ENCODE measurements at regions of chr17 and their contacts with region 1.

Region 1: DNA sequence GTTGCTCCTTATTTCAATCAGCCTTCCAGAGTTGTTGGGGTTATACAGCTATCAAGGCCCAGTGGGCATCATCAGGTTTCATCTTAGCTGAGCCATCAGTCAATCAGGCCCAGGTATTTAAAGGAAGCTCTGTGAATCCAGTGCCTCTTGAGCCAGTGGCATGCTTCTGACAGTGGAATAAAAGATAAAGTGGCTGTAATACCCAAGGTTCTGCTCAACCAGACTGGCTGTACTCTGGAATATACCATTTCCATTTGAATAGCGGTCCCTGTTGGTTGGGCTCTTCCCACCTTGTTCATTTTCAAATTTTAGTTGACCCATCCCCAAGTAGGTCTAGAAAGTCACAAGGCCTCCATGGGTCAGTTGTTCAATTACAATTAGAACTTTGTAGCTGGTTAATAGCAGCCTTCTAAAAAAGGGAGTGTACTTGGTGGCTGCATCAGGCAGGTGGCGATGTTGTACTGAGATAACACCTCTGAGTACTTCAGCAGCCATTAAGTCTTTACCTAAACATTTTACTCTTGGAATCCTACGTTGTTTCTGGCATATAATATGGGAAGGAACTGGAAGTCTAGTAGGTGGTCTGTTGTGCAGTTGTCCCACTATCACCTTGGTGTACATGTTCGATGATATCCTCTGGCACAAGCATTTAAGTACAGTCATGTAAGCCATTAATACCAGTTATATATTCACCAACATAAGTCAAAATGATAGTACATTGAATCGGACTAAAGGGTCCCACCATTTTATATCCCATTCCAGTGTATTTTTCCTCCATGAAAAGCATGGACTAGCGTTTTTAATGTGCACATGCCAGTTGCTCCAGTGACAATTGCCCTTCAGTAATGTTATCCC is 294.1 kb downstream of the BCAS3 start:
- DNase-seq: peak; percentile 71
- H3K4me3 ChIP-seq: peak overlapping the region in 1 of 2 experiments; percentile 8; a peak in 1 of 4 replicates
- H3K27ac ChIP-seq: no peak overlapping the region
- H3K4me1 ChIP-seq: no peaks in the 10 kb centered on the region
- H3K27me3 ChIP-seq: no peaks in the 10 kb centered on the region
- CTCF ChIP-seq: peak; percentile 79
- EP300 ChIP-seq: no peak
- RAD21 ChIP-seq: peak; percentile 97

Region 2: GRCh38 chr17:60554351-60554788 is 417.4 kb before region 1 on chr17:
- CTCF ChIA-PET with region 1: no interaction called
- POLR2A ChIA-PET with region 1: no interaction called
- DNase-seq: no peak
- H3K4me3 ChIP-seq: no peak overlapping the region
- H3K27ac ChIP-seq: no peak overlapping the region
- H3K4me1 ChIP-seq: no peaks in the 10 kb centered on the region
- H3K27me3 ChIP-seq: no peaks in the 10 kb centered on the region
- CTCF ChIP-seq: no peak
- EP300 ChIP-seq: no peak
- RAD21 ChIP-seq: no peak

Region 3: DNA sequence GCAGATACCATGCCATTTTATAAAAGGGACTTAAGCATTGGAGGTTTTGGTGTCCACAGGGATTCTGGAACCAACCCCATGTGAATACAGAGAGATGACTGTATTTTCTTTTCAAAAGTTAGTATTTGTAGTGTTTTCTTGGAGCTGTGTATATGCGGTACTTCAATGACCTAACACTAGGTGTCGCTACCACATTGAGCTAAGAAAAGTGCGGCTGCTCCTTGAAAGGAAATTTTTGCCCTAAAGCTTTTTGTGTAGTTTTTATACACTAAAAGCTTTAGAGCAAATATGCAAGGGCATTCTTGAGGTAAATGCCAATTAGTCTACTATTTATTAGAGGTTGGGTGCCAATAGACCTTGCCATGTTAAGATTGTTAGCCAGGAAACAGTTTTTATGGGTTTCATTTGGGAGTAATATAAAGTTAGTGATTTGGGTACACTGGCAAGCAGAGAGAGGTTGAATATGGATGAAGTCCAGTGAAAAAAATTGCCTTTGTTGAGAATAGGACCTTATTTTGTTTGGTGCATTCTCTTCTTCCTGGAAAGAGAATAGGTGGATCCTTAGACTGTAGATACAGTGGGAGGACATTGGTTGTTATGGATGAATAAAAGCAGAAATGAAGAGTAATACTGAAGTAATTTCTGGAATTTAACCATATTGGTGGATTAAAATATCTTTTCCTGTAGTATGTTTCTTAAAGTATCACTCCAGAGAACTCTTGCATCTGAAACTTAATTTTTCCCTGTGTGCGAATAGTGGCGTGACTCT is 250.8 kb before region 1 on chr17:
- CTCF ChIA-PET with region 1: interaction called, 13 read pairs
- POLR2A ChIA-PET with region 1: no interaction called
- DNase-seq: peak; percentile 66
- H3K4me3 ChIP-seq: peak overlapping the region in 1 of 2 experiments; percentile 25; a peak in 2 of 4 replicates
- H3K27ac ChIP-seq: peak overlapping the region; percentile 8 to 51; a peak in 2 of 4 replicates
- H3K4me1 ChIP-seq: peaks cover 0 to 5% of the 10 kb centered on the region in 2 experiments; a peak in 2 of 4 replicates
- H3K27me3 ChIP-seq: no peaks in the 10 kb centered on the region
- CTCF ChIP-seq: peak; percentile 100
- EP300 ChIP-seq: no peak
- RAD21 ChIP-seq: peak; percentile 98

Region 4: GRCh38 chr17:60743799-60744198 is 227.9 kb before region 1 on chr17:
- CTCF ChIA-PET with region 1: interaction called, 11 read pairs
- POLR2A ChIA-PET with region 1: no interaction called
- DNase-seq: no peak
- H3K4me3 ChIP-seq: peak overlapping the region; percentile 21 to 27; a peak in 3 of 4 replicates
- H3K27ac ChIP-seq: peak overlapping the region; percentile 79 to 84
- H3K4me1 ChIP-seq: peaks cover 10 to 17% of the 10 kb centered on the region in 2 experiments; a peak in 3 of 4 replicates
- H3K27me3 ChIP-seq: no peaks in the 10 kb centered on the region
- CTCF ChIP-seq: no peak
- EP300 ChIP-seq: 0 out of 4 replicates have a peak, but pooled peaks of 1 of the 2 experiments have one; percentile 36
- RAD21 ChIP-seq: no peak

Region 5: GRCh38 chr17:60916043-60916442 is 55.7 kb before region 1 on chr17:
- CTCF ChIA-PET with region 1: no interaction called
- POLR2A ChIA-PET with region 1: no interaction called
- DNase-seq: no peak
- H3K4me3 ChIP-seq: no peak overlapping the region
- H3K27ac ChIP-seq: no peak overlapping the region
- H3K4me1 ChIP-seq: no peaks in the 10 kb centered on the region; a peak in 1 of 4 replicates
- H3K27me3 ChIP-seq: no peaks in the 10 kb centered on the region
- CTCF ChIP-seq: no peak
- EP300 ChIP-seq: no peak
- RAD21 ChIP-seq: no peak

Region 6: GRCh38 chr17:60956681-60957080 is 15.1 kb before region 1 on chr17:
- CTCF ChIA-PET with region 1: interaction called, 15 read pairs
- POLR2A ChIA-PET with region 1: no interaction called
- DNase-seq: no peak
- H3K4me3 ChIP-seq: no peak overlapping the region
- H3K27ac ChIP-seq: no peak overlapping the region
- H3K4me1 ChIP-seq: no peaks in the 10 kb centered on the region
- H3K27me3 ChIP-seq: no peaks in the 10 kb centered on the region
- CTCF ChIP-seq: no peak
- EP300 ChIP-seq: no peak
- RAD21 ChIP-seq: no peak

Region 7: GRCh38 chr17:60989379-60989778 is 17.6 kb after region 1 on chr17:
- CTCF ChIA-PET with region 1: interaction called, 14 read pairs
- POLR2A ChIA-PET with region 1: no interaction called
- DNase-seq: peak; percentile 32
- H3K4me3 ChIP-seq: no peak overlapping the region
- H3K27ac ChIP-seq: peak overlapping the region in 1 of 2 experiments; percentile 5; a peak in 1 of 4 replicates
- H3K4me1 ChIP-seq: peaks cover 0 to 3% of the 10 kb centered on the region in 2 experiments; a peak in 2 of 4 replicates
- H3K27me3 ChIP-seq: no peaks in the 10 kb centered on the region
- CTCF ChIP-seq: no peak
- EP300 ChIP-seq: peak in 1 of 2 experiments; percentile 43; a peak in 1 of 4 replicates
- RAD21 ChIP-seq: peak; percentile 12; the same call in 1 of the 2 replicates

Region 8: GRCh38 chr17:61002316-61002736 is 30.6 kb after region 1 on chr17:
- CTCF ChIA-PET with region 1: interaction called, 14 read pairs
- POLR2A ChIA-PET with region 1: no interaction called
- DNase-seq: peak; percentile 55
- H3K4me3 ChIP-seq: no peak overlapping the region
- H3K27ac ChIP-seq: peak overlapping the region; percentile 46 to 78; a peak in 3 of 4 replicates
- H3K4me1 ChIP-seq: peaks cover 3 to 7% of the 10 kb centered on the region in 2 experiments; a peak in 1 of 4 replicates
- H3K27me3 ChIP-seq: no peaks in the 10 kb centered on the region
- CTCF ChIP-seq: peak; percentile 92
- EP300 ChIP-seq: peak; percentile 52 to 64; a peak in 2 of 4 replicates
- RAD21 ChIP-seq: peak; percentile 98

Region 9: GRCh38 chr17:61097781-61098180 is 126.0 kb after region 1 on chr17:
- CTCF ChIA-PET with region 1: no interaction called
- POLR2A ChIA-PET with region 1: no interaction called
- DNase-seq: no peak
- H3K4me3 ChIP-seq: no peak overlapping the region
- H3K27ac ChIP-seq: no peak overlapping the region
- H3K4me1 ChIP-seq: no peaks in the 10 kb centered on the region
- H3K27me3 ChIP-seq: no peaks in the 10 kb centered on the region
- CTCF ChIP-seq: no peak
- EP300 ChIP-seq: no peak
- RAD21 ChIP-seq: no peak